Calu3 (cell line): ENCODE measurements at regions of chr17 and their contacts with region 1.

Region 1: DNA sequence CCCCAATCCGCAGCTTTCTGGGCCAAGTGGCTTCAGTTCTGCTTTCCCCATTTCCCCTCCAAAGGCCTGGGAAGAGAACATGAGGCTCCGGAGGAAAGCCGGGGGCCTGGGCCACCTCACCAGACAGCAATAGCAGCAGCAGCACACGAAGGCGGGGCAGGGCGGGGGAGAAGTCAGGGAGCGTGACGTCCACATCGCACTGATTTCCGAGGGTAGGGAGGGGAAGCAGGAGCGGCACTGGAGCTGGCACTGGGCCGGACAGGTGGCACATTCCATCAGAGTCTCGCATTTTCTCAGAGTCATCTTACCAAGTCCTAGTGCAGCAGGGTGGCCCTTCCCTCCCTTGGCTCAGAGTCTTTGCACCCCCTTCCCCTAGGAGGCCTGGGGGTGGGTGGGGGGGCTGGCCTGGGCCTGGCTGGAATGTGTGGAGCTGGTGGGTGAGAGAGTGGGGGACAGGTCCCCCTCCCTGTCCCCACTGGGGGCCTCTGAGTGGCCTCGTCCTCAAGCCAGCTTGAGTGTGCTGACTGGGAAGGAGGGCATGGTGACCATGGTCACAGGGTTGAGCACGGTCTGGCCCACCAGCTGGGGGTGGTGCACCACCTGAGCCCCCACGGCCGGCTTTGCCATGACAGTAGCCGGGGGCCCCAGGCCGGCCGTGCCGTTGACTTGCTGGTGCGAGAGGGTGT is 14.3 kb downstream of the MNT start:
- DNase-seq: peak; percentile 61
- H3K4me3 Mint-ChIP-seq: no peak overlapping the region
- H3K27ac Mint-ChIP-seq: no peak overlapping the region
- H3K4me1 Mint-ChIP-seq: peaks cover 15% of the 10 kb centered on the region
- H3K27me3 Mint-ChIP-seq: no peaks in the 10 kb centered on the region
- CTCF ChIP-seq: no peak

Region 2: DNA sequence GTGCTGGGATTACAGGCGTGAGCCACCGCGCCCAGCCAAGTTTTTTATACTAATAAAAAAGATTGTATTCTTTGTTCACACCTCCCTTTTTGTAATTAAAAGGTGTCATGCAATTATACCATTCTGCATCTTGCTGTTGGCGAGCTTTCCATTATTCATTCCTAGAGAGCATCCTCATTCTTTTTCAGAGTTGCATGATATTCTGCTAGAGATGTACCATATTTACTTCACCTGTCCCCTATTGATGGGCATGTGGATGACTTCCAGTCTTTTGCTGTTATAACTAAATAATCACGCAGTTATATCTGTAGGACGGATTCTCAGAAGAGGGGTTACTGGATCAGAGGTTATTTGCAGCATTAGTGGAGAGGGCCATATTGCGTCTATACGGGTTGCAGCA is 32.2 kb before region 1 on chr17:
- CTCF ChIA-PET with region 1: no interaction called
- intact Hi-C with region 1: no loop called
- DNase-seq: no peak
- H3K4me3 Mint-ChIP-seq: no peak overlapping the region
- H3K27ac Mint-ChIP-seq: no peak overlapping the region
- H3K4me1 Mint-ChIP-seq: peaks cover 8% of the 10 kb centered on the region
- H3K27me3 Mint-ChIP-seq: no peaks in the 10 kb centered on the region
- CTCF ChIP-seq: no peak

Region 3: DNA sequence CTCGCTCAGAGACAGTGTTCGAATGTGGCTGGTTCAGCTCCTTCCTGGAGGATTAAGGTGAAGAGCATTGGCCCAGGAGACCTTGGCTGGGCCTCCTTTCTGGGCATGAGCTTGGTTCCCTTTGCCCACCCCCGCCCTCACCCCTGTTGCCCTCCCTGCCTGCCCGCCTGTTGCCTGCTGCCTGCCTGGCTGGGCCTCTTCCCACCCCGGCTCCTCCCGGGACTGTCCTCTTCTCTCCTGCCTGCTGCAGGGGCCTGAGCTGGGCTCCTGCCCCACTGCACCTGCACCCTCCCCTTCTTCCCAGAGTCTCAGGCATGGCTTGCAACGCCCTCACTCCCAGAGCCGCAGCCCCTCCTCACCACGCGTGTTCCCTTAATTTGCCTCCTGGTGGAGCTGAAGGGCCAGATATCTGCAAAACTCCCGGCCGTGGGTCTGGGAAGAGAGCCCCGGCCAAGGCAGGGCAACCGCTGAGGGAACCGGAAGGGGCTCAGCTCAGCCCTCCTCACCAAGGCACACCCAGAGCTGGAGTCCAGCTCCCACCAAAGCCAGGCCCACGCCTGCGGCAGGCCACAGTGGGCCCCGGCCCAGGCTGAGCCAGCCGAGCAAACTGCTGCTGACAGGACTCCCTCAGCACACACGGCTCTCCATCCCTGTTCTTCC is 16.9 kb before region 1 on chr17:
- CTCF ChIA-PET with region 1: no interaction called
- intact Hi-C with region 1: no loop called
- DNase-seq: no peak
- H3K4me3 Mint-ChIP-seq: no peak overlapping the region
- H3K27ac Mint-ChIP-seq: no peak overlapping the region
- H3K4me1 Mint-ChIP-seq: no peaks in the 10 kb centered on the region
- H3K27me3 Mint-ChIP-seq: no peaks in the 10 kb centered on the region
- CTCF ChIP-seq: no peak

Region 4: DNA sequence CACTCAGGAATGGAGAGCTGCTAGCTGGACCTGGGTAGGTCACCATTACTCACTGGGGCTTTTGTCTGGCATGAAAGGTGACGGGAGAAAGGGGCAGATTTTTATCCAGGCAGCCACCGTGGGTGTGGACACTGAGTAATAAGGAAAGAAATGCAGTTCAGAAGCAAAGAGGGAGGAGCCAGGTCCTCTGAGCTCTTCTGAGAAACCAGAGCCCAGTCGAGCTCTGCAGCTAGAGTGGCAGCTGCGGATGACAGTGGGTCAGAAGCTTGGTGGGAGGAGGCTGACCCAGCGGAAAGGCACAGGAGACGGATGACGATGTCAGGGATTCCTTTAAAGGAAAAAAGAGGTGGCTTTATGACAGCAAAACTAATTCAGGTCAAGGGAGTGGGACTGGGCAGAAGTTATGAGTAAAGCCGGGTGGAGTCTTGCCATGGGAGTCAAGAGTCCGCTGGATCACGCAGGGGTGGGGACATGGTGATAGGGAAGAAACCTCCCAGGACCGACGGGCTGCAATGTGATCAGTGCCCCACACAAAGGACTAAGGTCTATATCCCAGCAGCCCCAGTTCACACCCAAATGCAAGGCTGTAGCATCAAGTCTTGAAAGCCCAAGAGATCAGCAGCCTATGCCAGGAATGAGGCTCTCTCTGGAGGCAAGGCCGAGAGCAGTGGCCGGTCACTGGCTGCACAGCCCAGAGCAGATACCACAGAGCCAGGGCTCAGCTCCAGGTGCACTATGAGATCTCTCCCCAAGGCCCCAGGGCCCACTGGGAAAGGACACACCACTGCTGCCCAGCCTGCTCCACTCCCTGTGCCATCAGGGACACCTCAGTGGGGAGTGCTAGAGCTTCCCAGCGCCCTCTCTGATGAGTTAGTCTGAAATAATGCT is 20.6 kb after region 1 on chr17:
- CTCF ChIA-PET with region 1: interaction called, 13 read pairs
- intact Hi-C with region 1: no loop called
- DNase-seq: peak; percentile 77
- H3K4me3 Mint-ChIP-seq: peak overlapping the region; percentile 60
- H3K27ac Mint-ChIP-seq: peak overlapping the region; percentile 94
- H3K4me1 Mint-ChIP-seq: peaks cover 38% of the 10 kb centered on the region
- H3K27me3 Mint-ChIP-seq: no peaks in the 10 kb centered on the region
- CTCF ChIP-seq: no peak

Region 5: DNA sequence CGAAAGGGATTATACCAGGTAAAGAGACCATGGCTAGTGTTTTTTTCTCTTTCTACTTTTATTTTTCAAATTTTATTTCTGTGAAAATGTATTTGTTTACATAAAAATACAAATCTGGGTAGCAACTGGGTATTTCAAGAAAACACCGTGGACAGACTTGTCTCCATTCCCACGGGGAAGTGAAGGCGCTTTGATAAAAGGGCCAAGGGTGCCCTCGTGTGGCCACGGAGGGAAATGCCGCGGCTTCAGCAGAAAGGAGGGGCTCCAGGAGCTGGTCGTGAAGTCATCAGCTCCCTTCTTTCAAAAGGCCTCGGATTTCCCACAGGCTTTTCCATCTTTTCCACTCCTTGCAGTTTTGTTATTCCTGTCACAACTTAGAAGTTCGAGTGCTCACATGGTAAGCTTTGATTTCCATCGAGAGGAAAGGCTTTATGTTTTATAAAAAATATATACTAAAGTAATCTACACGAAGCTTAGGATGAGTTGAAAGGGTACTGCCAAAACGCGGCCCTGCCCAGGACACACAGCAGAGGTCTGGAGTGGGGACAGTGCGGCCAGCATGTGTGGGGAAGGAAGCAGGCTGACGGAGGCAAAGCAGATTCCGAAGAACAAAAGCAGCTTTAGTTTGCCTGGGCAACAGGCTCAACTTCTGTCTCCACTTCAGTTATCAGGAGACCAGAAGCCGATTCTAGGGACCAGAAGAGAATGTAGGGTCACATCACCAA is 29.6 kb after region 1 on chr17:
- CTCF ChIA-PET with region 1: interaction called, 89 read pairs
- intact Hi-C with region 1: loop called (anchors 1 kb)
- DNase-seq: peak; percentile 83
- H3K4me3 Mint-ChIP-seq: no peak overlapping the region
- H3K27ac Mint-ChIP-seq: no peak overlapping the region
- H3K4me1 Mint-ChIP-seq: no peaks in the 10 kb centered on the region
- H3K27me3 Mint-ChIP-seq: no peaks in the 10 kb centered on the region
- CTCF ChIP-seq: peak; percentile 72